PC-3 (cell line): ENCODE measurements at regions of chr7 and their contacts with region 1.

Region 1: GRCh38 chr7:111098011-111098925 is 7.3 kb downstream of the LRRN3 start:
- DNase-seq: peak; percentile 73
- ATAC-seq: peak; percentile 86
- H3K4me3 ChIP-seq: peak overlapping the region; percentile 41; the same call in 1 of the 2 replicates
- H3K27ac ChIP-seq: peak overlapping the region; percentile 95
- H3K4me1 ChIP-seq: peaks cover 30% of the 10 kb centered on the region
- H3K27me3 ChIP-seq: no peaks in the 10 kb centered on the region
- CTCF ChIP-seq: peak; percentile 86

Region 2: GRCh38 chr7:110003827-110004226 is 1094.4 kb before region 1 on chr7:
- CTCF ChIA-PET with region 1: no interaction called
- POLR2A ChIA-PET with region 1: no interaction called
- intact Hi-C with region 1: loop called (anchors 10 kb)
- DNase-seq: no peak
- ATAC-seq: peak; percentile 83
- H3K4me3 ChIP-seq: no peak overlapping the region
- H3K27ac ChIP-seq: no peak overlapping the region
- H3K4me1 ChIP-seq: no peaks in the 10 kb centered on the region
- H3K27me3 ChIP-seq: no peaks in the 10 kb centered on the region
- CTCF ChIP-seq: peak; percentile 32; the same call in 1 of the 2 replicates

Region 3: DNA sequence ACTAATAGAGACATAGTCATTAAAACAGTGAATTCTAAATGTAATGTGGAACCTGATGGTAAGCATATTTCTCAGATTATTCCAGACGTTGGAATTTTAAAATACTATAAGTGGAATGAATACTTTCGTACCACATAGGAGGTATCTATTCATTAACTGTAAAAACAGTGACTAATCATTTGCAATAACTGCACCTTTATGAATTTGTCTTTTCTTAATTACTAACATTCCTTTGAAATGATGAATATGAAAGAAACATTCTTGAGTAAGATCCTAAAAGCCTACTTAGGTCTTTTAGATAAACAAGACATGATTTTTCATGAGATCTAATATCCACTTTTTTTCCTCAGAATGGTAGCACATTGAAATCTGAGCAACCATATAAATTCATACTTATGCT is 556.3 kb before region 1 on chr7:
- CTCF ChIA-PET with region 1: interaction called, 6 read pairs
- POLR2A ChIA-PET with region 1: no interaction called
- intact Hi-C with region 1: loop called (anchors 10 kb)
- DNase-seq: peak; percentile 43
- ATAC-seq: peak; percentile 64
- H3K4me3 ChIP-seq: no peak overlapping the region
- H3K27ac ChIP-seq: 0 out of 2 replicates have a peak overlapping the region, but pooled peaks have one; percentile 9
- H3K4me1 ChIP-seq: peaks cover 23% of the 10 kb centered on the region
- H3K27me3 ChIP-seq: no peaks in the 10 kb centered on the region
- CTCF ChIP-seq: no peak

Region 4: GRCh38 chr7:111147708-111148533 is 49.7 kb after region 1 on chr7:
- CTCF ChIA-PET with region 1: no interaction called
- POLR2A ChIA-PET with region 1: no interaction called
- intact Hi-C with region 1: no loop called
- DNase-seq: no peak
- ATAC-seq: no peak
- H3K4me3 ChIP-seq: no peak overlapping the region
- H3K27ac ChIP-seq: no peak overlapping the region
- H3K4me1 ChIP-seq: no peaks in the 10 kb centered on the region
- H3K27me3 ChIP-seq: no peaks in the 10 kb centered on the region
- CTCF ChIP-seq: no peak

Region 5: GRCh38 chr7:111198255-111198654 is 100.0 kb after region 1 on chr7:
- CTCF ChIA-PET with region 1: no interaction called
- POLR2A ChIA-PET with region 1: no interaction called
- intact Hi-C with region 1: loop called (anchors 1 kb)
- DNase-seq: peak; percentile 96
- ATAC-seq: peak; percentile 96
- H3K4me3 ChIP-seq: no peak overlapping the region
- H3K27ac ChIP-seq: peak overlapping the region; percentile 86
- H3K4me1 ChIP-seq: peaks cover 28% of the 10 kb centered on the region
- H3K27me3 ChIP-seq: no peaks in the 10 kb centered on the region
- CTCF ChIP-seq: no peak

Region 6: GRCh38 chr7:111210996-111211395 is 112.7 kb after region 1 on chr7:
- CTCF ChIA-PET with region 1: no interaction called
- POLR2A ChIA-PET with region 1: no interaction called
- intact Hi-C with region 1: loop called (anchors 2 kb)
- DNase-seq: peak; percentile 53
- ATAC-seq: peak; percentile 96
- H3K4me3 ChIP-seq: no peak overlapping the region
- H3K27ac ChIP-seq: peak overlapping the region; percentile 76
- H3K4me1 ChIP-seq: peaks cover 12% of the 10 kb centered on the region; the same call in 1 of the 2 replicates
- H3K27me3 ChIP-seq: no peaks in the 10 kb centered on the region
- CTCF ChIP-seq: no peak

Region 7: DNA sequence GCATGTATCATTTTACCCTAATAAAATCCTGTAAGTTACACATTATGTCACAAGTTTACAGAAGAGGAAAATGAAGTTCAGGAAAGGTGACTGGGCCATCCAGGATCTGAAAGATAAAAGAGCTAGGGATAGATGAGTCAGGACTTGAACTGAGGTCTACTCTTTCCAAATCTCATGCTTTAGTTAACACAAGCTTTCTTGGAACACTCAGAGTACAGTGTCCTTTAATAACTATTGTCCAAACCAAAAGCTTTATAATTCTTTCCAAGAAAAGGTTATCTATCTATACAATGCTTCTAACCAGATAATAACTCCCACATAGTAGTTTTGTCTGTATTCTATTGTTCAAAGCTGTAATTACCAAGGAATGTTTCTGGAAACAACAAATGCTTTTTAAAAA is 157.3 kb after region 1 on chr7:
- CTCF ChIA-PET with region 1: no interaction called
- POLR2A ChIA-PET with region 1: no interaction called
- intact Hi-C with region 1: no loop called
- DNase-seq: peak; percentile 33
- ATAC-seq: peak; percentile 50; the same call in 1 of the 2 replicates
- H3K4me3 ChIP-seq: no peak overlapping the region
- H3K27ac ChIP-seq: no peak overlapping the region
- H3K4me1 ChIP-seq: no peaks in the 10 kb centered on the region
- H3K27me3 ChIP-seq: no peaks in the 10 kb centered on the region
- CTCF ChIP-seq: no peak